ENCODE measurements at regions of chrX and their contacts with region 1.

Region 1: GRCh38 chrX:74291964-74292807 is 11.8 kb upstream of the ZCCHC13 start:
- DNase-seq: peak; percentile 92
- ATAC-seq: peak; percentile 88
- H3K4me3 ChIP-seq: peak overlapping the region; percentile 78 to 87 (median 80)
- H3K4me3 Mint-ChIP-seq: peak overlapping the region; percentile 99
- H3K27ac ChIP-seq: peak overlapping the region; percentile 77 to 81
- H3K27ac Mint-ChIP-seq: peak overlapping the region; percentile 98
- H3K4me1 ChIP-seq: peaks cover 3 to 6% of the 10 kb centered on the region in 2 donors
- H3K4me1 Mint-ChIP-seq: peaks cover 18% of the 10 kb centered on the region
- H3K27me3 ChIP-seq: no peaks in the 10 kb centered on the region
- H3K27me3 Mint-ChIP-seq: no peaks in the 10 kb centered on the region
- CTCF ChIP-seq: no peak

Region 2: DNA sequence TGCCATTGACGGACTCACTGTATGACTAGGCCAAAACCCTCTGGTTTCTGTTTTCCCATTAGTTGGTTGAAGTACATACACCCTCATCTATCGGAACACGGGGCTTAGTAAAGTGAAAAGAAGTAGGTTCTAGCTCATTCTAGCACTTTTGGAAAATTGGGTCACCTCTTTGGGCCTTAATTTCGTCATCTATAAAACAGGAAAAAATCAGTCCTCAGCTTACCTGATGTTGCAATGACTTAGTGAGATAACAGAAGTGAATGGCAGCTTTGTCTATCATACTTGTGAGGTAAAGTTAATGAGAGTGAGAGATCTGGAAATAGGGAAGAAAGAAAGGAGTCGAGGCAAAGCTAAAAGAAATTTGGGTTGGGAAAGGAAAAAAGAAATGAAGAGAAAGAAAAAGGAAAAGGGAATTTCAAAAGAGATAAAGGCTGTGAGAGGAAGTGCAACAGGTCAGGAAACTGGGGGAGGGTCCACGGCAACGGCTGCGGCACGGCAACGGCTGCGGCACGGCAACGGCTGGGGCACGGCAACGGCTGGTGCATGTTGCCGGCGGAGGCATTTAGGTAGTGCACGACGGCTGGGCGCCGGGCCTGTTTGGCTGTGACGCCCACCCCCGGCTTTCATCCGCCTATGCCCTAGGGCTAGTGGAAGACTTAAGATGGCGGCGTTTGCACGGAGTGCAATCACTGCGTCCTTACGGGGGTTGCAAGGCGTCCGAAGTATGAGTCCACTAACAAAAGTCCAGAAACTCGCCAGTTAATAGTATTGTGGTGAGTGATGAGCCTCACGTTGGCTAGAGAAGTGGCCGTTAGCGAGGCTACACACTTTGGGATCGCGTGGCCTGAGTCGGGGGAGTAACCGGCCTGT is 348.3 kb before region 1 on chrX:
- CTCF ChIA-PET with region 1: no interaction called
- POLR2A ChIA-PET with region 1: no interaction called
- intact Hi-C with region 1: loop called (anchors 1 kb)
- DNase-seq: peak; percentile 87
- ATAC-seq: peak; percentile 99
- H3K4me3 ChIP-seq: peak overlapping the region; percentile 72 to 98 (median 95)
- H3K4me3 Mint-ChIP-seq: peak overlapping the region; percentile 97
- H3K27ac ChIP-seq: peak overlapping the region; percentile 65 to 86
- H3K27ac Mint-ChIP-seq: peak overlapping the region; percentile 95
- H3K4me1 ChIP-seq: peaks cover 7 to 16% of the 10 kb centered on the region in 2 donors
- H3K4me1 Mint-ChIP-seq: peaks cover 23% of the 10 kb centered on the region
- H3K27me3 ChIP-seq: no peaks in the 10 kb centered on the region
- H3K27me3 Mint-ChIP-seq: no peaks in the 10 kb centered on the region
- CTCF ChIP-seq: no peak